CD8-positive, alpha-beta T cell (primary cell): ENCODE measurements at regions of chr7 and their contacts with region 1.

Region 1: DNA sequence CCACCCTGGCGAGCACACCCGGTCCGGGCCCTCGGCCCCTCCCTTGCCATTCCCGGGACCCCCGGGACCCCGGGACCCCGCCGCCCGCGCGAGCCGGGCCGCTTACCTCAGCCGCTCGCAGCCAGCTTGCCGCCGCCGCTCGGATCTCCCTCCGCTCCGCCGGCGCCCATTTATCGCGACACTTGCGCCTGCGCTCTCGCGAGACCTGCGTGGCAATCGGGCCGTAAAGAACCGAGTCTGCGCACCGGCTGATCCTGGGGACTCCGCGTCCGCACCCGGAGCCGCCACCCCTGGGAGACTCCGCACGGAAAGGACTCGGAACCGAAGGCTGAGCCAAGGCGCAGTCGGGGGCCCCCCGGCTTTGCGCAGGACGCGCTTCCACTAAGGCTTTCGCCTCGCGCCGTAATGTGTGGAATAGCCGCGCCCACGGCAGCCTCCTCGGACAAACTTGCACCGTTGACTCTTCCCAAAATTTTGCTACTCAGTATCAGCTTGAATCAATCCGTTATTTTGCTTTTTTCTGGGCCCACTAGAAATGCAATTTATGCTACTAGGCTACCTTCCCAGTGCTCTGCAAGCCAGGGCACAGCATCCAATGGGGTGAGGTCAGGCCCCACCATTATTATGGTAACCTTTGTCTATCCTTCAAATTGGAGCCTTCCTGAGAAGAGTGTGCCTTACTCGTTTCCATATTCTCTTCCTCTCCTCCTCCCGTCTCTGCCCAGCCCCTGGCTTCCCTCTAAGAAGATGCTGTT is at the start of gene MAD1L1:
- DNase-seq: peak; percentile 77 to 93 (median 88)
- ATAC-seq: peak; percentile 93
- H3K4me3 ChIP-seq: peak within 1 kb of the TSS; percentile 63 to 96
- H3K4me3 Mint-ChIP-seq: peak within 1 kb of the TSS; percentile 94
- H3K27ac ChIP-seq: peak within 1 kb of the TSS; percentile 33 to 61
- H3K27ac Mint-ChIP-seq: peak within 1 kb of the TSS; percentile 83
- H3K4me1 ChIP-seq: peaks cover 24% of the 10 kb centered on the region
- H3K4me1 Mint-ChIP-seq: peaks cover 34% of the 10 kb centered on the region
- H3K27me3 ChIP-seq: no peaks in the 10 kb centered on the region
- H3K27me3 Mint-ChIP-seq: no peaks in the 10 kb centered on the region
- CTCF ChIP-seq: no peak
- total RNA-seq, gene MAD1L1: 88.7 to 91.0 TPM

Region 2: DNA sequence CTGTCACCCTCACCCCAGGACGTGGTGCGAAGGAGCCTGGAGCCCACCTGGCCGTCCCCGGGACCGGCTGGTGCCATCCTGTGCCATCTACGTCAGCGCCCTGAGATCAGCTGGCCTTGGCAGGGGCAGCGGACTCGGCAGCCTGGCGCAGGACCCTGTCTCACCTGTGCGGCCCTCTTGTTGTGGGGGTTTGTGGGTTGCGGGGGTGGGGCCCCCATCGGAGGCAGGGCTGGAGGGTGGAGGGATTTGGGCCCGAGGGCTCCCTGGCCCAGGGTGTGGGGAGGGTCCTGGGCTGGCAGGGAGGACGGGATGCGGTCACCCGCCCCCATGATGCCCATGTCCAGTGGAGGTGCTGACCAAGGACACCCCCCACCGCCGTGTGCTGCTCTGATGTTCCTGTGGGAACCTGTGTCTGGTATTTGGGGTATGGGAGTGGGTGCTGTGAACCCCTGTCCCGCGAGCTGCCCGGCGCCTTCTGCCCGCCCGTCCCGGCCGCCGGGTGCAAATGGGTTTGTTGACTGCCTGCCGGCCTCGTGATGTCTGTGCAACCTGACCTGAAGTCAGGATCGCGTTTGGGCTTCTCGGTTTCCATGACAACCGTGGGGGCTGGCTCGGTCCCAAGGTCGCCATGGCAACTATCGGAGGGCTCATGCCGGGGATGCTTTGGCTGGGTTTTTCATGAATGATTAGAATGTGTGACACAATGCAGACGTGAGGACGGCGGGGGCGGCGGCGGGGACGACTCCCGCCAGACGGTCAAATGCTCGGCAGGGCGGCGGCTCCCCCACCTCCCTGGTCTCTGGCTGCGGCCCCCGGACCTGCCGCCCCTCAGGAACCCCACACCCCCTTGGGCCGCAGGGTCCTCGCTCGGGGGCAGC is 695.2 kb before region 1 on chr7:
- CTCF ChIA-PET with region 1: no interaction called
- POLR2A ChIA-PET with region 1: no interaction called
- intact Hi-C with region 1: no loop called
- DNase-seq: peak in 2 of 9 experiments; percentile 33 to 42
- ATAC-seq: no peak
- H3K4me3 ChIP-seq: no peak overlapping the region
- H3K4me3 Mint-ChIP-seq: no peak overlapping the region
- H3K27ac ChIP-seq: no peak overlapping the region
- H3K27ac Mint-ChIP-seq: peak overlapping the region; percentile 41
- H3K4me1 ChIP-seq: peaks cover 17% of the 10 kb centered on the region
- H3K4me1 Mint-ChIP-seq: peaks cover 23% of the 10 kb centered on the region
- H3K27me3 ChIP-seq: no peaks in the 10 kb centered on the region
- H3K27me3 Mint-ChIP-seq: no peaks in the 10 kb centered on the region
- CTCF ChIP-seq: no peak

Region 3: GRCh38 chr7:1569833-1570633 is 662.9 kb before region 1 on chr7 and contains the start of gene PSMG3:
- CTCF ChIA-PET with region 1: no interaction called
- POLR2A ChIA-PET with region 1: no interaction called
- intact Hi-C with region 1: loop called in 1 of 2 experiments (anchors 10 kb)
- DNase-seq: peak; percentile 77 to 93 (median 88)
- ATAC-seq: peak; percentile 87
- H3K4me3 ChIP-seq: peak within 1 kb of the TSS; percentile 64 to 95
- H3K4me3 Mint-ChIP-seq: peak within 1 kb of the TSS; percentile 87
- H3K27ac ChIP-seq: peak within 1 kb of the TSS; percentile 69 to 90
- H3K27ac Mint-ChIP-seq: peak within 1 kb of the TSS; percentile 91
- H3K4me1 ChIP-seq: peaks cover 16% of the 10 kb centered on the region
- H3K4me1 Mint-ChIP-seq: peaks cover 29% of the 10 kb centered on the region
- H3K27me3 ChIP-seq: no peaks in the 10 kb centered on the region
- H3K27me3 Mint-ChIP-seq: no peaks in the 10 kb centered on the region
- CTCF ChIP-seq: no peak
- total RNA-seq, gene PSMG3: 20.9 to 21.0 TPM

Region 4: DNA sequence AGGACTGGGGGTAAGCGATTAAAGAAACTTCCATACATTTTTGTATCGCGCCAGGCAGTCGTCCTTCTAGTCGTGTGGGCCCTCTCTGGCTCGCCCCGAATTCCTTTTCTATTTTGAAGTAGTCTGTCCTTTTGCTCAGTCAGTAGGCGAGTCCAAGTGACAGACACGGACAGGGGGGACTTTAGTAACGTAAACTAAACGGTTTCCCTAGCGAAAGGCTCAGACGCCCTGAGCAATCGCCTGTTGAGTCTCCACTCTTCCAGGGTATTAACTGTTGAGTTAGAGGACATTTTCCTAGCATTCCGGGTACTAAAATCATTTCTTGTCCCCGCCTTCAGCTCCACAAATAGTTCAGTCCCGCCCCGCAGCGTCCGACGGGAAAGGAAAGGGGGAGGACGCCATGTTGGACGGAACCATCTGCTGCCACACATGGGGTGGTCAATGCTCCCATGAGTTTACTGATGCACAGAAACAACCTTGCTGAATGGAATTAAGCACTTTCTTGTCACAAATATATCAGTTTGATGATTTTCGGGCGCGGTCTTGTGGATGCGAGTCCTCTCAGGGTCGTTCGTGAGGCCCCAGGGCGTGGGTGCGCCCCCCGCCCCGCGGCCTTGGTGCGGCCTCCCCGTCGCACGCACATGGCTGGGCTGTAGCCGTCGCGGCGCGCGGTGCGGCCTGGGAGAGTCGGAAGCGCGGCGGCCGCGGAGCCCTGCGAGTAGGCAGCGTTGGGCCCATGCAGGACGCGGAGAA is 121.4 kb after region 1 on chr7 and contains the start of gene EIF3B:
- CTCF ChIA-PET with region 1: no interaction called
- POLR2A ChIA-PET with region 1: interaction called, 5 read pairs
- intact Hi-C with region 1: loop called (anchors 1 to 2 kb)
- DNase-seq: peak; percentile 80 to 97 (median 90)
- ATAC-seq: peak; percentile 84
- H3K4me3 ChIP-seq: peak within 1 kb of the TSS; percentile 72 to 74
- H3K4me3 Mint-ChIP-seq: peak within 1 kb of the TSS; percentile 88
- H3K27ac ChIP-seq: peak within 1 kb of the TSS; percentile 99
- H3K27ac Mint-ChIP-seq: peak within 1 kb of the TSS; percentile 99
- H3K4me1 ChIP-seq: peaks cover 45% of the 10 kb centered on the region
- H3K4me1 Mint-ChIP-seq: peaks cover 40% of the 10 kb centered on the region
- H3K27me3 ChIP-seq: no peaks in the 10 kb centered on the region
- H3K27me3 Mint-ChIP-seq: no peaks in the 10 kb centered on the region
- CTCF ChIP-seq: no peak
- total RNA-seq, gene EIF3B: 234 to 239 TPM

Region 5: GRCh38 chr7:3294432-3295100 is 1061.6 kb after region 1 on chr7:
- CTCF ChIA-PET with region 1: no interaction called
- POLR2A ChIA-PET with region 1: no interaction called
- intact Hi-C with region 1: loop called in 1 of 2 experiments (anchors 10 kb)
- DNase-seq: no peak
- ATAC-seq: no peak
- H3K4me3 ChIP-seq: no peak overlapping the region
- H3K4me3 Mint-ChIP-seq: no peak overlapping the region
- H3K27ac ChIP-seq: no peak overlapping the region
- H3K27ac Mint-ChIP-seq: no peak overlapping the region
- H3K4me1 ChIP-seq: no peaks in the 10 kb centered on the region
- H3K4me1 Mint-ChIP-seq: no peaks in the 10 kb centered on the region
- H3K27me3 ChIP-seq: no peaks in the 10 kb centered on the region
- H3K27me3 Mint-ChIP-seq: peaks cover 27% of the 10 kb centered on the region
- CTCF ChIP-seq: no peak